Activated CD4-positive, alpha-beta T cell treated with anti-CD3 and anti-CD28 coated beads for 36 hours (primary cell): ENCODE measurements at regions of chr1 and their contacts with region 1.

Region 1: DNA sequence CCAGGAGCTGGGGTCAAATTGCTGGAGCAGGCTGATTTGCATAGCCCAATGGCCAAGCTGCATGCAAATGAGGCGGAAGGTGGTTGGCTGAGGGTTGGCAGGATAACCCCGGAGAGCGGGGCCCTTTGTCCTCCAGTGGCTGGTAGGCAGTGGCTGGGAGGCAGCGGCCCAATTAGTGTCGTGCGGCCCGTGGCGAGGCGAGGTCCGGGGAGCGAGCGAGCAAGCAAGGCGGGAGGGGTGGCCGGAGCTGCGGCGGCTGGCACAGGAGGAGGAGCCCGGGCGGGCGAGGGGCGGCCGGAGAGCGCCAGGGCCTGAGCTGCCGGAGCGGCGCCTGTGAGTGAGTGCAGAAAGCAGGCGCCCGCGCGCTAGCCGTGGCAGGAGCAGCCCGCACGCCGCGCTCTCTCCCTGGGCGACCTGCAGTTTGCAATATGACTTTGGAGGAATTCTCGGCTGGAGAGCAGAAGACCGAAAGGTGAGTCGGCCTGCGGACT is at the start of gene GADD45A:
- DNase-seq: peak; percentile 97
- ATAC-seq: peak; percentile 83
- H3K4me3 Mint-ChIP-seq: peak within 1 kb of the TSS; percentile 81
- H3K27ac Mint-ChIP-seq: peak within 1 kb of the TSS; percentile 88
- H3K4me1 Mint-ChIP-seq: peaks cover 49% of the 10 kb centered on the region
- H3K27me3 Mint-ChIP-seq: no peaks in the 10 kb centered on the region
- total RNA-seq, gene GADD45A: 20.5 to 26.7 TPM

Region 2: GRCh38 chr1:66924756-66925557 is 760.2 kb before region 1 on chr1 and contains the starts of genes DNAI4 and MIER1:
- CTCF ChIA-PET with region 1: no interaction called
- POLR2A ChIA-PET with region 1: no interaction called
- intact Hi-C with region 1: loop called (anchors 2 to 5 kb)
- DNase-seq: peak; percentile 99
- ATAC-seq: peak; percentile 94
- H3K4me3 Mint-ChIP-seq: peak within 1 kb of the TSS; percentile 93
- H3K27ac Mint-ChIP-seq: peak within 1 kb of the TSS; percentile 92
- H3K4me1 Mint-ChIP-seq: peaks cover 52% of the 10 kb centered on the region
- H3K27me3 Mint-ChIP-seq: no peaks in the 10 kb centered on the region
- total RNA-seq, gene DNAI4: 0.87 to 3.6 TPM
- total RNA-seq, gene MIER1: 49.7 to 51.5 TPM

Region 3: GRCh38 chr1:67097305-67097704 is 587.8 kb before region 1 on chr1:
- CTCF ChIA-PET with region 1: no interaction called
- POLR2A ChIA-PET with region 1: no interaction called
- intact Hi-C with region 1: no loop called
- DNase-seq: no peak
- ATAC-seq: no peak
- H3K4me3 Mint-ChIP-seq: no peak overlapping the region
- H3K27ac Mint-ChIP-seq: no peak overlapping the region
- H3K4me1 Mint-ChIP-seq: no peaks in the 10 kb centered on the region
- H3K27me3 Mint-ChIP-seq: peaks cover 8% of the 10 kb centered on the region

Region 4: DNA sequence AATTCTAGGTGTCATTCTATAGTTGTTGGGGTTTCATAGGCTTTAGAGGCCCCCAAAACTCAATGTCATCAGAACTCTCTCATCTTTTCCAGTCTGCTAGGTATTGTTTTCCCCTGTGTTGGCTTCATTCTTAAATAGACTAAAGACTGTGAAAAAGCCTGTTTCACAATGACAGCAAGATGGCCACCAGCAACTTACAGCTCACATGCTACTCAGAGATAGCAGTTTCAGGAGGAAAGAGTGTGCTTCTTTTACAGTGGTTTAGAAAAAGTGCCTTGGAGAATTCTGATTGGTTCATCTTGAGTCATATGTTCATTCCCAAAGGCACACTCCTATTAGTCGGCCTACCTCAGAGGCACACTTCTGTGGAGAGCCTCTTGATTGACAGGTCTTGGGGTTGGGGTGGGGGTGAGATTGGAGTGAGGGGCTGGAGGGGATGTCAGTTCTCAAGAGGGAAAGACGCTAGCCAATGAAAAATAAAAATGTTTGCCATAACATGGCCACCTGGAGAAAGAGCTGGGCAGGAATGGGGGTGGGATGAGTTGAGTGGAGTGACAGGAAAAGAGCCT is 510.3 kb before region 1 on chr1:
- CTCF ChIA-PET with region 1: no interaction called
- POLR2A ChIA-PET with region 1: no interaction called
- intact Hi-C with region 1: loop called (anchors 5 kb)
- DNase-seq: peak; percentile 61
- ATAC-seq: peak; percentile 70
- H3K4me3 Mint-ChIP-seq: peak overlapping the region; percentile 25
- H3K27ac Mint-ChIP-seq: peak overlapping the region; percentile 94
- H3K4me1 Mint-ChIP-seq: peaks cover 68% of the 10 kb centered on the region
- H3K27me3 Mint-ChIP-seq: no peaks in the 10 kb centered on the region

Region 5: GRCh38 chr1:67332653-67333529 is 352.2 kb before region 1 on chr1:
- CTCF ChIA-PET with region 1: no interaction called
- POLR2A ChIA-PET with region 1: no interaction called
- intact Hi-C with region 1: loop called (anchors 1 to 2 kb)
- DNase-seq: peak; percentile 62
- ATAC-seq: peak; percentile 86
- H3K4me3 Mint-ChIP-seq: peak overlapping the region; percentile 44
- H3K27ac Mint-ChIP-seq: peak overlapping the region; percentile 87
- H3K4me1 Mint-ChIP-seq: peaks cover 79% of the 10 kb centered on the region
- H3K27me3 Mint-ChIP-seq: no peaks in the 10 kb centered on the region

Region 6: DNA sequence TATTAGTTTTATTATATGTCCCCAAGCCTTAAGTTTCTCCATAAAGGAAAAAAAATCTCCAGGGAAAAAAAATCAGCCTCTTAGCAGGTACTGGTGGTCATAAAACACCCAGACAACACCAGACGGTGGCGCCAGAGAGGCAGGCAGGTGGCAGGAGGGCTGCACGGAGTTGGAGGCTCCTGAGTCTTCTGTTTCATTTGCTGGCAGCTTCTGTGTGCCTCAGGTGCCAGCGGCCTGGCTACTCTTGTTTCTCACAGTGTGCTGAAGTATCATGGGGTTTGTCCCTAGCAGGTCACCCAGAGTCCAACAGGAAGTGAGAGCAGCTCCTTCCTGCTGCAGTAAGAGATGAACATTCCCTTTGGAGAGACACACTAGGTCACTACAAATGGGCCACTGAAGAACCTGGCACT is 123.4 kb before region 1 on chr1:
- CTCF ChIA-PET with region 1: interaction called, 11 read pairs
- POLR2A ChIA-PET with region 1: no interaction called
- intact Hi-C with region 1: loop called (anchors 2 to 5 kb)
- DNase-seq: peak; percentile 95
- ATAC-seq: peak; percentile 91
- H3K4me3 Mint-ChIP-seq: no peak overlapping the region
- H3K27ac Mint-ChIP-seq: no peak overlapping the region
- H3K4me1 Mint-ChIP-seq: peaks cover 5% of the 10 kb centered on the region
- H3K27me3 Mint-ChIP-seq: peaks cover 4% of the 10 kb centered on the region

Region 7: DNA sequence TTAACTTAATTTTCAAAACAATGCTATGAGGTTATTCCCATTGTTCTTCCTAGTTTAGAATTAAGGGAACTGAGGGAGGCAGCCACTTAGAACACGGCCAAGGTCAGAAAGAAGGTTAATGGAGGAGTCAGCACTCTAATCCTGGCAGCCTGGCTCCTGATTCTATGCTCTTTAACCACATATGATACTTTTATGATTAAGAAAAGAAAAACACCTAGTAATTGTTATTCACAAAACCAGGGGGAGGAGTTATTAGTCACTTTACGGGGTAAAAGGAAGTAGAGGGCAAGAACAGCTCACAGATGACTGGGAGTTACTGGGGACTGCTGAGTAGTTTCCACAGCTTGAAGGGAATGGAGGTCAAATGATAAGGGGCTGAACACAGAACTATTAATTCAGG is 38.5 kb after region 1 on chr1:
- CTCF ChIA-PET with region 1: interaction called, 9 read pairs
- POLR2A ChIA-PET with region 1: interaction called, 5 read pairs
- intact Hi-C with region 1: loop called (anchors 1 kb)
- DNase-seq: peak; percentile 38
- ATAC-seq: peak; percentile 93
- H3K4me3 Mint-ChIP-seq: no peak overlapping the region
- H3K27ac Mint-ChIP-seq: no peak overlapping the region
- H3K4me1 Mint-ChIP-seq: peaks cover 12% of the 10 kb centered on the region
- H3K27me3 Mint-ChIP-seq: no peaks in the 10 kb centered on the region

Region 8: GRCh38 chr1:68496680-68497357 is 811.7 kb after region 1 on chr1 and contains the start of gene DEPDC1:
- CTCF ChIA-PET with region 1: no interaction called
- POLR2A ChIA-PET with region 1: no interaction called
- intact Hi-C with region 1: loop called in 1 of 2 experiments (anchors 10 kb)
- DNase-seq: peak; percentile 88
- ATAC-seq: peak; percentile 98
- H3K4me3 Mint-ChIP-seq: peak within 1 kb of the TSS; percentile 82
- H3K27ac Mint-ChIP-seq: peak within 1 kb of the TSS; percentile 57
- H3K4me1 Mint-ChIP-seq: peaks cover 15% of the 10 kb centered on the region
- H3K27me3 Mint-ChIP-seq: peaks cover 10% of the 10 kb centered on the region
- total RNA-seq, gene DEPDC1: 15.9 to 24.3 TPM